Posterior vena cava (tissue), 2 donors: ENCODE measurements at regions of chr1 and their contacts with region 1.

Region 1: DNA sequence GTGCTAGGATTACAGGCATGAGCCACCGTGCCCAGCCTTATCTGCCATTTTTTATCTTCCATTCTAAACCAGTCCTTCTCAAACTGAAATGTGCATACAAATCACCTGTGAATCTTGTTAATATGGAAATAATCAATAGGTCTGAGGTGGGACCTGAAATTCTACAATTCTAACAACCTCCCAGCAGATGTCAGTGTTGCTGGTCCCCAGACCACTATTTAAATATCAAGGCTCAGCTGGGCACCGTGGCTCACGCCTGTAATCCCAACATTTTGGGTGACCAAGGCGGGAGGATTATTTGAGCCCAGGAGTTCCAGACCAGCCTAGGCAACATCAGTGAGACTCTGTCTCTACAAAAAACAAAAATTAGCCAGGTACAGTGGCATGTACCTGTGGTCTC is 4.1 kb downstream of the UQCRHL start:
- DNase-seq: no peak

Region 2: GRCh38 chr1:15885701-15886610 is 82.6 kb after region 1 on chr1:
- intact Hi-C with region 1: loop called in 1 of 2 experiments (anchors 10 kb)
- DNase-seq: peak; percentile 99

Region 3: GRCh38 chr1:15957228-15958095 is 154.1 kb after region 1 on chr1:
- intact Hi-C with region 1: loop called in 1 of 2 experiments (anchors 5 kb)
- DNase-seq: peak; percentile 31